ENCODE measurements at regions of chr7 and their contacts with region 1.

Region 1: DNA sequence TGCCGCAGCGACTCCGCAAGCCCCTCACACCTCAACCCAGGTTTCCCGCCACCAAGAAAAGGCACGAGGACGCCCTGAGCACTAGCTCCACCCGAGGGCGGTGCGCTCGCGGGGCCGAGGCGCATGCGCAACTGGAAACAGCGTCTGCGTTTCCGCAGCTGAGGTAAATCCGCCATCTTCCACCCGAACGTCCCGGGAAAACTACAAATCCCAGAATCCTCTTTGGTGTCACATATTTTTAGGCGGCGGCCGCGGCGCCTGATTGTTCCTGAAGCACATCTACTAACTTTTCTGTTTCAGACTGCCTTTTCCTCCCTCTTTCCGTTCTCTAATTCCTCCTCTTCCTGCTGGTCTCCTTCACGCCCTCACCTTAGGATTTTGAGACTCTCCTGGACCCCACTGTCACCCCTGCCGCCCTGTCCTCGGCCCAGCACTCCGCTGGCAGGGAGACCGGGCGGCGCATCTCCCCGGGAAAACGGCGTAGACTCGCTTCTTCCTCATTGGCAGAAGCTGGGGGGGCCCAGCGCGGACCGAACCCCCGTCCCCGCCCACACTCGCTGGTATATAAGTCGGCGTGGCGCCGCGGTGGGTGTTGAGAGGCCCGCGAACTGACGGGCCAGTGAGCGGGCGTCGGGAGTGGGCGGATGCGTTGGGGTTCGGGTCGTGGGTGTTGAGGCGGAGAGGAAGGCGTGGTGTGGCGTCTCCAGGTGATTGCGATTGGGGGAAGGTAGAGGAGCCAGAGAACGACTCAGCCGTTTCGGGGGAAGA is at the start of gene ZCWPW1:
- DNase-seq: peak; percentile 95
- H3K4me3 ChIP-seq: peak within 1 kb of the TSS; percentile 86
- H3K27ac ChIP-seq: peak within 1 kb of the TSS; percentile 100
- H3K27me3 ChIP-seq: no peaks in the 10 kb centered on the region
- CTCF ChIP-seq: 0 out of 2 replicates have a peak, but pooled peaks have one; percentile 9
- polyA plus RNA-seq, gene ZCWPW1: 0.89 and 1.5 TPM in 2 replicates

Region 2: DNA sequence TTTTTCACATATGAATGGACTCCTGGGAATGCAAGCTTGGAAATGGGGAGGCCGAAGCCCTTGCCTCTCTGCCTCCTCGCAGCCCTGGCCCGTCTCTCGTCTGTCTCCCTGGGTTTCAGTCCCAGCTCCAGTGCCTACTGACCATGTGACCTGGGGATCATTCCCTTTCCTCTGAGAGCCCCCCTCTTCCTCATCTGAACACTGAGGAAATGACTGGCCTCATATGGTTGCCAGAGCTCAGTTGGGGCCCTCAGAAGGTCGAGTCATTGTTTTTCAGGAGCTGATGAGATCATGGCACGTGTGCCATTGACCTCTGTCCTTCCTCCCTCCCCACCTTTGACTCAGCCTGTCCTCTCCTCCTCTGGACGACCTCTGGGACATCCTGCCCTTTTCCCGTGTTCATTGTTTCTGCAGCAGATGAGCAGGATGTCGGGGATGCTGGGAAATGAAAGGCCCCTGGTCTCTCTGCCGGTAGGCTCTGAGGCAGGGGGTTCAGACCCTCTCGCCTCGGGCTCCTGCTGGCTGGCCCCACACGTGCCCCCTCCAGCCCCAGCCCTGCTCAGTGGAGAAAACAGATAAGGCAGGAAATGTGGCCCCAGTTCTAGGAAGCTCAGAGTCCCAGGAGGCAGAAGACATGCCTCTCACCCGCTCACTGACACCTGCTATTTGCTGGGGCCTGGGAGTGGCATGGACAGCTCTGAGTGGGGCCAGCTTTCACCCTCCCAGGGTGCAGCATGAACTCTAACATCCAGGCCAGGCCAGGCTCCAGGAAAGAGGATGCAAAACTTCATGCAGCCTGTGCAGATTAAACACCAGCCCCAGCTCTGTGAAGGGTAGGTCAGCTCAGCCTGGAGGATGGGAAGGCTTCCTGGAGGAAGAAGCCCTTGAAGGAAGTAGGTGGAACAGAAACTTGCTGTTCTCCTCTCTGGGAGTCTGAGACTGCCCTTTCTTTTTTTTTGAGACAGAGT is 16.2 kb after region 1 on chr7:
- CTCF ChIA-PET with region 1: interaction called, 3 read pairs
- POLR2A ChIA-PET with region 1: interaction called, 20 read pairs
- DNase-seq: no peak
- H3K4me3 ChIP-seq: no peak overlapping the region
- H3K27ac ChIP-seq: peak overlapping the region; percentile 75
- H3K27me3 ChIP-seq: no peaks in the 10 kb centered on the region
- CTCF ChIP-seq: no peak

Region 3: GRCh38 chr7:100789055-100789454 is 360.7 kb after region 1 on chr7:
- CTCF ChIA-PET with region 1: no interaction called
- POLR2A ChIA-PET with region 1: interaction called, 12 read pairs
- DNase-seq: no peak
- H3K4me3 ChIP-seq: no peak overlapping the region
- H3K27ac ChIP-seq: no peak overlapping the region
- H3K27me3 ChIP-seq: peaks cover 11% of the 10 kb centered on the region
- CTCF ChIP-seq: 0 out of 2 replicates have a peak, but pooled peaks have one; percentile 8

Measured in AG04450 (cell line).